ENCODE measurements at regions of chr13 and their contacts with region 1.

Region 1: DNA sequence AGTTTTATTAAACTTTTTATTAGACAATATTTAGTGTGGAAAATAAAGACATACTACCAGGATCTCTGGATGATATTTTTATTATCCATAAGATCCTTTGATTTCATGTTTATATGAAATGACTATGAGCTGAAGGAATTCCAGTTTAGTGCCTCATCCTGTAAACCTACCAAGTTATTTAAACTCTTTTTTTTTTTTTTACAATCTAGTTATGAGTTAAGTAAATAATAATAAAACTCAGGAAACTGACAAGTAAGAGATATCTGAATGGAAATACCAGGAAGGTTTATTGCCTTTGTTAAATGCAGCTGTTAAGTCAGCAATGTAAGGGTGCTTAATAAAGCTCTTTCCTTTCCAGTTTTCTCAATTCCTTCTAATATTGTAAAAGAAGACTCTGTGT is 53.9 kb downstream of the RXFP2 start:
- DNase-seq: no peak

Region 2: DNA sequence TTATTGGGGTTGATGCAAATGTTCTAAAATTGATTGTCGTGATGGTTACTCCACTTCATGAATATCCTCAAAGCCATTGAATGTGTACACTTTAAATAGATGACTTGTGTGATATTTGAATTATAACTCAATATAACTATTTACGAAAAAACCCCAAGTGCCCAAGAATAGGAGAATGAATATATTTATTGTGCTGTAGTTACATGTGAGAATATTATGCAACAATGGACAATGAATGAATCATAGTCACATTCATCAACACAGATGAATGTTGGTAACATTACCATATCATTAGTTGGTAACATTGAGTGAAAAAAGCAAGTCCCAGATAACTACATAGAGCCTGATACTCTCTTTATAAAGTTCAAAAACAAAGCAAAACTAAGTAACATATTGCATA is 1815.0 kb before region 1 on chr13:
- intact Hi-C with region 1: no loop called
- DNase-seq: no peak

Region 3: GRCh38 chr13:31301119-31301518 is 492.1 kb before region 1 on chr13:
- intact Hi-C with region 1: loop called in 1 of 2 experiments (anchors 5 kb)
- DNase-seq: no peak

Region 4: DNA sequence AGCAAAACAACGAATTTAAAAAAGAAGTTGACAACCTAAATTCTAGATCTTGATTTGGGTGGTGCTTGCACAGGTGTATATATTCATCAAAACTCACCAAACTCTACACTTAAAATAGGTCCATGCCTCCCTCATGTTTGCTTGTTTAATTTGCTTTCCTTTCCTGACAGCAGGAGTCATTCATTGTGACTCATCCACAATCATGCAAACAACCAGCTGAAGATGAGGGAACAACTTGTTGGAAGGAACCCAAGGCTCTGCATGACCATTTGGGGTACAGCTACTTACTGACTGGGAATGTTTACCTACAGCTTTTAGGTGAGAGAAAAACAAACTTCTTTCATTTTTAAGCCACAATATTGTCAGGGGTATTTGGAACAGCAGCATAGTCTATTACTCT is 42.7 kb after region 1 on chr13:
- intact Hi-C with region 1: no loop called
- DNase-seq: no peak